ENCODE measurements at regions of chr1 and their contacts with region 1.

Region 1: DNA sequence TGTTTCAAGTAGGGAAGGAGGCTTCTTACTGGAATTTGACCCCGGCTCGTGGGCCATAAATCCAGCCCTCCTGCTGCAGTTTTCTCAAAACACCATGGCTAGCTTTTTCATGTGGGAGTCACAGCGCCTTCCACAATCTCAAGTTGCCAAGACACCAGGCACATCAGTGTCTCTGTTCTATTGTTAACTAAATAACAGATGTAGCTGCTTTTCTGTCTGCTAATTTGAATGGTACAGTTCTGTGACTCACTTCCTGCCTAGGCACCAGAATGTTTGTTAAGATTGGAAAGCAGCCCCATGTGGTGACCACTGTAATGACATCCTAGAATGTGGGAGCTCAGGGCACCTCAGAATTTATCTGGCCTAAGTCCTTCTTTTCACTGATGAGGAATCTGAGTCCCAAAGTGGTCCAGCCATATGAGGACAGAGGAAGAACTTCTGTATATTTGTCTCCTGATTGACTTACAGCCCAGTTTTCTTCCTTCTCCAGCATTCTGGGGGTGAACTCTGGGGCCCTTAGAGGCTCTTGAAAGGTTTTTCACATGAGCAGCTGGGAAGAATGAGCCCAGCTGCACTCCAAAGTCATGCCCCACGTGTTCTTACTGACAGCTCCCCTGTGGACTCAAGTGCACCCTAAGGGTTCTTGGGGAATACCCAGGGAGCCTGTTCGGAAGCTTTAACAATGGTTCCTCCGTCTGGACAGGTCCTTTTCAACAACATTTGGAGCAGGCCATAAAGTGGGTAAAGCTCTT is 27.5 kb downstream of the TRIM45 start:
- DNase-seq: peak in 2 of 10 donors; percentile 40 to 45
- H3K4me3 ChIP-seq: peak overlapping the region in 1 of 59 donors; percentile 1
- H3K27ac ChIP-seq: peak overlapping the region in 57 of 59 donors; percentile 14 to 92 (median 78)
- H3K27me3 ChIP-seq: no peaks in the 10 kb centered on the region
- CTCF ChIP-seq: peak in 36 of 56 donors; percentile 11 to 51 (median 28)

Region 2: GRCh38 chr1:117077267-117077666 is 16.8 kb before region 1 on chr1:
- intact Hi-C with region 1: no loop called
- DNase-seq: no peak
- H3K4me3 ChIP-seq: no peak overlapping the region
- H3K27ac ChIP-seq: no peak overlapping the region
- H3K27me3 ChIP-seq: no peaks in the 10 kb centered on the region
- CTCF ChIP-seq: no peak

Region 3: GRCh38 chr1:117113199-117113598 is 19.2 kb after region 1 on chr1:
- intact Hi-C with region 1: loop called in 1 of 2 experiments (anchors 1 kb)
- DNase-seq: peak; percentile 14 to 86 (median 70)
- H3K4me3 ChIP-seq: no peak overlapping the region
- H3K27ac ChIP-seq: peak overlapping the region in 52 of 59 donors; percentile 1 to 83 (median 66)
- H3K27me3 ChIP-seq: no peaks in the 10 kb centered on the region
- CTCF ChIP-seq: no peak

Measured in dorsolateral prefrontal cortex (tissue), 120 donors.